BJ (cell line): ENCODE measurements at regions of chr9 and their contacts with region 1.

Region 1: DNA sequence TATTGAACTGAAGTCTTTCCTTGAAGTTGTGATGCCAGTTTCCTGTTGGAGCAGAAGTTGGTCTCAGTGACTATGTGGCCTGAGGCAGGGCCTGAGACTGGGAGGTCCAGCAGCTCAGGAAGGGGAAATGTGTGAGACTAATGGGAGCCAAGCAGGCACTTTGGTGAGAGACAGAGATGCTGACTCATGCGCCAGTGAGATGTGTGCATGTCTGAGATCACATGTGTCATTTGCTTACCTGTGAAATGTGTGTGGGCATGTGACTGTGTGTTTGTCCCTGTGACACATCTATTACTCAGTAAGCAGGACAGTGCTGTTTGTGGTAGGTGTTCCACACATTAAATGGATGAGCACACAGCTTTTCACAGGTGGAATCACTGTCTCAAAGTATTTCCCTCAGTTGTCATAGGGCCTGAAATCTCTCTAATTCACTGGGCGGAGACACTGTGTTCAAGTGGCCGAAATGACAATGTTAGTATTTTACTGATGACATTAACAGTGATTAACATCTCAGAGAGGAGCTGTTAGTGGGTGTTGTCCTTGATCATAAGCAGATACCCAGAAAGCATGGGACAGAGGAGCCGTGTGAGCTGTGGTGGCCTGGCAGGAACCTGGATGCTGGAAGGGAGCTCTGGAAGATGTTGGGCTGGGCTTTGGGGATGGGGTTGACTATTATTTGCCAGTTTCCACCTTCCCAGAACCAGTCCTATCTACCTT is 7.4 kb downstream of the NPR2 start:
- DNase-seq: peak; percentile 26
- H3K4me3 ChIP-seq: no peak overlapping the region
- H3K27me3 ChIP-seq: no peaks in the 10 kb centered on the region
- CTCF ChIP-seq: no peak

Region 2: DNA sequence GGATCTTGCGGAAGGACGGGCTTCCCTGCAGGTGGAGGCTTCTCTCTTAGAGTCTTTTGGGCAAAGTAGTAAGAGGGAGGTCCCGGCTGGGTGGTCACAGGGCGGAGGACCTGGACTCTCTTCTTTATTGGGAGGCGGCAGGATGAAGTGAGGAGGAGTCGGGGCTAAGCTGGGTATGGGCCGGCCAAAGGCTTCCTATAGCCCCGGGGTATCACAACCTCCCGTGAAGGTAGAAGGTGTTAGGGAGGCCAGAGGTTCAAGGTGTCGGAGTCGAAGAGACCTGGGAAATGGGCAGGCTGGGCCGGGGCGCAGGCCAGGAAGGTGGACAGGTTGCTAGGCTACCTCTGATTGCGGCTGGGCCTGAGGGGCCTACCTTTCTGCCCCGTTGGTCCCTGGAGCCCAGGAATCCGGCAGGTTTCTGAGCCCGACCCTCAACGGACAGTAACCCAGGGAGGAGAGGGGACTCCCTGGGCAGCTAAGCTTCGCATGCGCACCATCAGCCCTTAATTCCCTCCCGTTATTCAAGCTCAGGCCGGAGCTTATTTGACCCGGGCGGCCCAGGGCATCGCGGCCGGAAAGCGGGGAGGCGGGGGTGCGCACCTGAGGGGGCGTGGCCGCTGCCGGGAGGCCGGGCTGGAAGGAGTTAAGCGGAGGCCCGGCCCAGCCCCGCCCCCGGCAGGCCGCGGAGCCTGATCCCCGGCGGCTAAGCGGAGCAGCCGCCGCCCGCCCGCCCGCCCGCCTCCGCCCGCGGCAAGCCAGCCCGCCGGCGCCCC is 194.1 kb before region 1 on chr9 and contains the start of gene TESK1:
- CTCF ChIA-PET with region 1: no interaction called
- POLR2A ChIA-PET with region 1: no interaction called
- DNase-seq: no peak
- H3K4me3 ChIP-seq: peak within 1 kb of the TSS; percentile 59
- H3K27me3 ChIP-seq: no peaks in the 10 kb centered on the region
- CTCF ChIP-seq: no peak
- polyA plus RNA-seq, gene TESK1: 23.2 and 32.6 TPM in 2 replicates

Region 3: DNA sequence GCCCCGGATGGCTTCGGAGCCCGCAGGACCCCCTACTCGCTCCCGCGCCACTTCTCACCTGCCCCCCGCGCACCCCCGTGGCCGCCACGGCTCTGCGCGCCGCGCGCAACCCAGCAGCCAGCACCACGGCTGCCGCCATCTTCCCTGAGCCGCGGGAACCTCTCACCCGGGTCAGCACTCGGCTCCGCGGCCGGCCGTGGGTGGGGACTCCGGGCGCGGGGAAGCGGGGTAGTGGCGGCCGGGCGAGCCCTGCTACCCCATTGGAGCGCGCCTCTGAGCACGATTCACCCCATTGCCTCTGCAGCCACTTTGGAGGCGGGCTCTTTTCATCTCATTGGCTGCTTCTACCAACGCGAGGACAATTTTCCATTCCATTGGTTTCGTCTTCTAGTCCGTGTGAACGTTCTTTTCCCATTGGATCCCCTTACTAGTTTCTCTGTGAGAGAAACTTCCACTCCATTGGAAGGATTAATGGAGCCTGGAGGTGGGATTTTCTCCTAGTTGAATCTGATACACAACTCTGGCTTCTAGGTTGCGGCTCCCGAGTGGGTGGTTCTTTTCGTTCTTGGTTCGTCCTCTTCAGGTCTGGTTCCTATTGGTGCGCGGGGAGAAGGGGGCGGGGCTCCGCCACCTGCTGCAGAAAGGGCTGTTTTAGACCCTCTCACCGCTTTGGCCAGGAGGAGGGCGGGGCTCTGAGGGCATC is 16.2 kb after region 1 on chr9 and contains the start of gene HINT2:
- CTCF ChIA-PET with region 1: interaction called, 22 read pairs
- POLR2A ChIA-PET with region 1: interaction called, 3 read pairs
- DNase-seq: peak; percentile 97
- H3K4me3 ChIP-seq: peak within 1 kb of the TSS; percentile 59
- H3K27me3 ChIP-seq: peaks cover 2% of the 10 kb centered on the region; the same call in 1 of the 2 replicates
- CTCF ChIP-seq: no peak
- polyA plus RNA-seq, gene HINT2: 20.9 and 30.0 TPM in 2 replicates

Region 4: DNA sequence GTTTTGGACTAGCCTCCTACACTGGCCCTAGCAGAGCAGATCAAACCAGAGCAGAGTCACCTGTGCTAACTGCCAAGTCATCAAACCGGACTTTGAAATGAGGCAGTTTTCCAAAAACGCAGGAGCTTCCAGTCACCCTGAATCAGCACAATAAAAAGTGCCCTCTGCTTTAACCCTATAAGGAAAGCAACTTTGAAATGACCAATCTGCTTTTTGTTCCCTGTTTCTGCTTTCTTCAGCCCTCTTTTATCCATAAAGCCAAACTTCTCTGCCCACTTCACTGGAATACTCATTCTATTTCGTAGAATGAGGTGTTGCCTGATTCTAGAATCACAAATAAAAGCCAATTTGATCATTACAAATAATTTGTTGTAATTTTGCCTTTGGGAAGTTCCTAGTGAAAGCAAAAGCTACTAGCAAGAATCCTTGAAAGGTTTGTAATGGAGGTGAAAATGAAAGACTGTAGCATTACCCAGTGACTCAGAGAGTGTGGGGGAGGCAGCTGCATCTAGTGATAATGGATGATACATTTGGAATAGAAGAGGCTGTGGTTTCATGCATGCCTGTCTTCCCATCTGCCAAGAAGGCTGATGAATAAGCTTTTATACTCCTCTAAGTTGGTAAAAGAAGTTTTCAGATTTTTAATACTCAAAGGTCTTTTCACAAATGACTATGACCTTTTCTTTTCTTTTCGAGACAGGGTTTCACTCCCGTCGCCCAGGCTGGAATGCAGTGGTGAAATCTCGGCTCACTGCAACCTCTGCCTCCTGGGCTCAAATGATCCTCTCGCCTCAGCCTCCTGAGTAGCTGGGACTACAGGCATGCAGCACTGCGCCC is 125.3 kb after region 1 on chr9:
- CTCF ChIA-PET with region 1: no interaction called
- POLR2A ChIA-PET with region 1: no interaction called
- DNase-seq: peak; percentile 82
- H3K4me3 ChIP-seq: no peak overlapping the region
- H3K27me3 ChIP-seq: no peaks in the 10 kb centered on the region
- CTCF ChIP-seq: no peak